H1 (cell line): ENCODE measurements at regions of chr6 and their contacts with region 1.

Region 1: GRCh38 chr6:31723245-31723979 is at the start of gene MPIG6B:
- DNase-seq: no peak
- H3K4me3 ChIP-seq: no peak within 1 kb of the TSS
- H3K27ac ChIP-seq: no peak within 1 kb of the TSS
- H3K4me1 ChIP-seq: peaks cover 1 to 10% (median 6%) of the 10 kb centered on the region in 4 experiments; a peak in 6 of 7 replicates
- H3K27me3 ChIP-seq: no peaks in the 10 kb centered on the region
- CTCF ChIP-seq: no peak
- EP300 ChIP-seq: no peak
- POLR2A ChIP-seq: no peak
- RAD21 ChIP-seq: no peak
- total RNA-seq, gene MPIG6B: not detected in 2 replicates

Region 2: DNA sequence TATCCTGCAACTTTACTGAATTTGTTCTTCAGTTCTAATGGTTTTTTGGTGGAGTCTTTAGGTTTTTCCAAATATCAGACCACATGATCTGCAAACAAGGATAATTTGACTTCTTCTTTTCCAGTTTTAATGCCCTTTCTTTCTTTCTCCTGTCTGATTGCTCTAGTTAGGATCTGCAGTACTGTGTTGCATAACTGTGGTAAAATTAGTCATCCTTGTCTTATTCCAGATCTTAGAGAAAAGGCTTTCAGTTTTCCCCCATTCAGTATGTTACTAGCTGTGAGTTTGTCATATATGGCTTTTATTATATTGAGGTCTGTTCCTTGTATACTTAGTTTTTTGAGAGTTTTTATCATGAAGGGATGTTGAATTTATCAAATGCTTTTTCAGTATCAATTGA is 315.7 kb before region 1 on chr6:
- CTCF ChIA-PET with region 1: no interaction called
- POLR2A ChIA-PET with region 1: no interaction called
- DNase-seq: no peak
- H3K4me3 ChIP-seq: no peak overlapping the region
- H3K27ac ChIP-seq: no peak overlapping the region
- H3K4me1 ChIP-seq: peaks cover 0 to 12% (median 3%) of the 10 kb centered on the region in 4 experiments; a peak in 5 of 7 replicates
- H3K27me3 ChIP-seq: no peaks in the 10 kb centered on the region; a peak in 1 of 7 replicates
- CTCF ChIP-seq: no peak
- EP300 ChIP-seq: no peak
- POLR2A ChIP-seq: no peak
- RAD21 ChIP-seq: no peak

Region 3: GRCh38 chr6:31712296-31712695 is 11.1 kb before region 1 on chr6:
- CTCF ChIA-PET with region 1: interaction called, 39 read pairs
- POLR2A ChIA-PET with region 1: interaction called, 22 read pairs
- DNase-seq: no peak
- H3K4me3 ChIP-seq: no peak overlapping the region
- H3K27ac ChIP-seq: no peak overlapping the region
- H3K4me1 ChIP-seq: peaks cover 11 to 18% (median 13%) of the 10 kb centered on the region in 4 experiments
- H3K27me3 ChIP-seq: no peaks in the 10 kb centered on the region; a peak in 1 of 7 replicates
- CTCF ChIP-seq: no peak
- EP300 ChIP-seq: no peak
- POLR2A ChIP-seq: no peak
- RAD21 ChIP-seq: no peak